ENCODE measurements at regions of chr5 and their contacts with region 1.

Region 1: GRCh38 chr5:37722236-37723146 is 117.3 kb downstream of the GDNF start:
- DNase-seq: peak; percentile 96
- ATAC-seq: peak; percentile 93
- H3K4me3 ChIP-seq: no peak overlapping the region
- H3K27ac ChIP-seq: no peak overlapping the region
- H3K4me1 ChIP-seq: peaks cover 9% of the 10 kb centered on the region
- H3K27me3 ChIP-seq: no peaks in the 10 kb centered on the region
- CTCF ChIP-seq: no peak
- POLR2A ChIP-seq: no peak
- RAD21 ChIP-seq: peak; percentile 25; the same call in 1 of the 2 replicates

Region 2: DNA sequence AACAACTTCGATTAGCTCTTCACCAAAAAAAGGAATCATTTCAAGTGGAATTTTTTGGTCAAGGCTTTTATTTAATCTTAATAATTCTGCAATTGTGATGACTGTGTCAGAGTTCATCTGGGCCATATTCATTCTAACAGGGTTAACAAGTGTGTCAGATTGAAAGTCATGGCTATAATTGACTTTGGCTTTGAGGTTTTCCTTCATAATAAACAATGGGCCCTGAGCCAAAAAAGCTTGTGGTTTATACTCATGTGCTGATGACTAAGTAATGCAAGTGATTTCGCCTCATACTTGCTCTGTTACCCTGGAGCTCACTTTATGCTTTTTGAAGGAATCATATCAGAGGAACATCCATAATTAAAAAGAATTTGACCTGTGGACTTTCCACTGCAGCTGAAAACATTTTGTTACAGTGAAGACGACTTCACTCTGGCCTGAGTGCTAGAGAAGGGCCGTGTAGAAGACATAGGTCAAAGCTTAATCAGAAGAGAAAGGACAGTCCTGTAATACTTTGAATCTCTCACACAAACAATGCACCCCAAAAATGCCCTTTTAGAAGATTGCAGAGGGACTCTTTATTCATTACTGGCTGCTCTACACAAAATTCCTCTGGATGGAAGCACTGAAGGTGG is 15.7 kb after region 1 on chr5:
- CTCF ChIA-PET with region 1: interaction called, 7 read pairs
- POLR2A ChIA-PET with region 1: no interaction called
- dilution Hi-C with region 1: no loop called
- in situ Hi-C with region 1: no loop called
- intact Hi-C with region 1: loop called (anchors 2 kb)
- DNase-seq: peak; percentile 93
- ATAC-seq: peak; percentile 65
- H3K4me3 ChIP-seq: no peak overlapping the region
- H3K27ac ChIP-seq: no peak overlapping the region
- H3K4me1 ChIP-seq: peaks cover 18% of the 10 kb centered on the region
- H3K27me3 ChIP-seq: no peaks in the 10 kb centered on the region
- CTCF ChIP-seq: no peak
- POLR2A ChIP-seq: no peak
- RAD21 ChIP-seq: 0 out of 2 replicates have a peak, but pooled peaks have one; percentile 1

Measured in IMR-90 (cell line).